ENCODE measurements at regions of chrX and their contacts with region 1.

Region 1: GRCh38 chrX:48631350-48632090 is 34.2 kb downstream of the WDR13 start:
- DNase-seq: peak; percentile 13 to 74 (median 54)
- ATAC-seq: peak; percentile 88
- H3K4me3 ChIP-seq: no peak overlapping the region
- H3K4me3 Mint-ChIP-seq: peak overlapping the region in 9 of 10 donors; percentile 38 to 70 (median 57)
- H3K27ac ChIP-seq: no peak overlapping the region
- H3K27ac Mint-ChIP-seq: peak overlapping the region in 7 of 9 donors; percentile 28 to 79 (median 54)
- H3K4me1 ChIP-seq: peaks cover 7 to 14% of the 10 kb centered on the region in 2 donors
- H3K4me1 Mint-ChIP-seq: peaks cover 2 to 14% (median 7%) of the 10 kb centered on the region in 7 donors
- H3K27me3 ChIP-seq: no peaks in the 10 kb centered on the region
- H3K27me3 Mint-ChIP-seq: no peaks in the 10 kb centered on the region

Region 2: GRCh38 chrX:48761674-48762471 is 130.4 kb after region 1 on chrX and contains the start of gene GLOD5:
- CTCF ChIA-PET with region 1: no interaction called
- POLR2A ChIA-PET with region 1: no interaction called
- intact Hi-C with region 1: no loop called
- DNase-seq: peak in 2 of 9 donors; percentile 2 to 20
- ATAC-seq: no peak
- H3K4me3 ChIP-seq: no peak within 1 kb of the TSS
- H3K4me3 Mint-ChIP-seq: peak within 1 kb of the TSS in 1 of 10 donors; percentile 59
- H3K27ac ChIP-seq: no peak within 1 kb of the TSS
- H3K27ac Mint-ChIP-seq: peak within 1 kb of the TSS in 1 of 9 donors; percentile 63
- H3K4me1 ChIP-seq: no peaks in the 10 kb centered on the region
- H3K4me1 Mint-ChIP-seq: peaks cover 0 to 7% (median 0%) of the 10 kb centered on the region in 7 donors
- H3K27me3 ChIP-seq: no peaks in the 10 kb centered on the region
- H3K27me3 Mint-ChIP-seq: peaks cover 0 to 7% (median 0%) of the 10 kb centered on the region in 5 donors
- total RNA-seq, gene GLOD5: not detected

Region 3: DNA sequence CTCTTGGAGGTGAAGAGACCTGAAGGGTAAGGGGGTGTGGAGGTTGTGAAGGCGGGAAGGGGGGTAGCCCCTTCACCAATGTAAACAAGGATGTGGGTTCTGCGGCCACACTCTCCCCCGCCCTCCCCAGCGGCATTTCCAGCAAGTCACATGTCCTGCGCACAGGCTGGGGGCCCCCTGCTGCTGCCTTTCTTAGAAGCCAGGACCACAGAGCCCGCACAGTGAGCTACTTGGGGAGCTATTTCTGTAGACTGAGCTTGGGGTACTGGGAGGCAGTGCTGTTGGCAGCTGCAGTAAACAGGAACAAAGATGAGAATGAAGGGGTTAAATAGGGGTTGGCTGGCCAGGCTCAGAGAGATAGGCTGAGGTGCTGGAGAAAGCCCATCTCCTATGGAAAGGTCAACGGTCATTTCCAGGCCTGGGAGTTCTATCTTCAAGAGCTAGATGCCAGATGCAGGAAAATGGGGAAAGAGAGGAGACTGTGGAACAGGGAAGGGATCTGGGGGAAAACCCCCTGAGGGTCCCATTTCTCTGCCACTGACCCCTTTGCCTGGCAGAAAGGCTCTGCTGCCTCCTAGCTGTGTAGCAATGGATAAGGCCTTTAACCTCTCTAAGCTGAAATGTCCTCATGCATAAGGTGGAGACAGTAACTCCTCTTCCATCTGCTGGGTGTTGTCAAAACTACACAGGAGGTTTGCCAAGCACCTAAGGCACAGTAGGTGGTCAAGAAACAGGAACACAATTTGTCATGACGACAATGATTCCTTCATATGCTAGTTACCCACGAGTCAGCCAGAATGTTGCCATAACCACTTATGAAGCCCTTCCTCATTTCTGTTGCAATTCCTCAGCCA is 305.8 kb after region 1 on chrX:
- CTCF ChIA-PET with region 1: no interaction called
- POLR2A ChIA-PET with region 1: interaction called, 3 read pairs
- intact Hi-C with region 1: loop called in 1 of 2 experiments (anchors 1 kb)
- DNase-seq: peak; percentile 59 to 96 (median 92)
- ATAC-seq: peak; percentile 75
- H3K4me3 ChIP-seq: peak overlapping the region; percentile 70
- H3K4me3 Mint-ChIP-seq: peak overlapping the region; percentile 78 to 96 (median 88)
- H3K27ac ChIP-seq: peak overlapping the region; percentile 97
- H3K27ac Mint-ChIP-seq: peak overlapping the region; percentile 96 to 99 (median 99)
- H3K4me1 ChIP-seq: peaks cover 69 to 80% of the 10 kb centered on the region in 2 donors
- H3K4me1 Mint-ChIP-seq: peaks cover 36 to 91% (median 80%) of the 10 kb centered on the region in 7 donors
- H3K27me3 ChIP-seq: no peaks in the 10 kb centered on the region
- H3K27me3 Mint-ChIP-seq: peaks cover 0 to 3% (median 0%) of the 10 kb centered on the region in 5 donors

Measured in naive thymus-derived CD4-positive, alpha-beta T cell (primary cell).